Calu3 (cell line): ENCODE measurements at regions of chr7 and their contacts with region 1.

Region 1: GRCh38 chr7:106793015-106793975 is 71.8 kb upstream of the PIK3CG start:
- DNase-seq: peak; percentile 53
- H3K4me3 Mint-ChIP-seq: no peak overlapping the region
- H3K27ac Mint-ChIP-seq: no peak overlapping the region
- H3K4me1 Mint-ChIP-seq: no peaks in the 10 kb centered on the region
- H3K27me3 Mint-ChIP-seq: no peaks in the 10 kb centered on the region
- CTCF ChIP-seq: peak; percentile 62

Region 2: DNA sequence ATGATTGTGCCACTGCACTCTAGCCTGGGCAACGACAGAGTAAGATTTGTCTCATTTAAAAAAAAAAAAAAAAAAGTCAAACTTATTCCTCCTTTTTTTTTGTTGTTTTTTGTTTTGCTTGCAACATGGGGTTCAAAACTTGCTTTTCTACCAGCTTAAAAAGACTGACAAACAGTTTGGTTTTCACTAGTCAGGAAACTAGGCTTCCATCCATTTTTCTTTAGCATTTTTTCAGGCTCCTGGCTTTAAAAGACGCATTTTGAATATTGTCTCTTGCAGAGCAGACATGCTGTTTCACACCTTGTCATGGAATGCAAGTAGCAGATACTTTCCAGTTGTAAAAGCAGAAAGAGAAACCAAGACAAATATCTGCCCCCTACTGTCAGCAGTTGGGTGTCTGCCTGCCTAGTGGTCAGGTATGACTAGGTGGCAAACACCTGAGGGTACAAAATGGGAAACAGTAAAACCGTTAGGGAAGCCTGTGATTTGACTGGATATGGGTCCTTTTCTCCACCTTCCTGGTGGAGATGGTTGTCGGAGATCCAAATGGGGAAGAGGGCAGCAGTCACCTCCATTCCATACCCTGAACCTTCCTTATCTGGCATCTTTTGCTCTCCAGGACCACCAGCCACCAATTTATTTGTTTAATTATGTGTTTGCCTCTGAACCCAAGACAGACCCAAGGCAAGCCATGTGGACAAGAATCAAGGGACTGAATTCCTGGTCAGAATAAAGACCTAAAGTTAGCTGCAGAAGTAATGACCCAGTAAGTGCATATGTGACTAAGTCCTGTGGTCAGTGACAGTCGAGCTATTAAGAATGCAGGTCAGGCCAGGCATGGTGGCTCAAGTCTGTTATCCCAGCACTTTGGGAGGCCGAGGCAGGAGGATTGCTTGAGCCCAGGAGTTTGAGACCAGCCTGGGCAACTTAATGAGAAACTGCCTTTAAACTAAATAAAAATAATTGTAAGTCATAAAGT is 272.0 kb before region 1 on chr7:
- CTCF ChIA-PET with region 1: no interaction called
- intact Hi-C with region 1: no loop called
- DNase-seq: peak; percentile 19
- H3K4me3 Mint-ChIP-seq: no peak overlapping the region
- H3K27ac Mint-ChIP-seq: no peak overlapping the region
- H3K4me1 Mint-ChIP-seq: no peaks in the 10 kb centered on the region
- H3K27me3 Mint-ChIP-seq: peaks cover 14% of the 10 kb centered on the region
- CTCF ChIP-seq: no peak

Region 3: GRCh38 chr7:106824458-106824857 is 31.2 kb after region 1 on chr7:
- CTCF ChIA-PET with region 1: no interaction called
- intact Hi-C with region 1: no loop called
- DNase-seq: peak; percentile 51
- H3K4me3 Mint-ChIP-seq: no peak overlapping the region
- H3K27ac Mint-ChIP-seq: peak overlapping the region; percentile 71
- H3K4me1 Mint-ChIP-seq: peaks cover 26% of the 10 kb centered on the region
- H3K27me3 Mint-ChIP-seq: no peaks in the 10 kb centered on the region
- CTCF ChIP-seq: no peak

Region 4: DNA sequence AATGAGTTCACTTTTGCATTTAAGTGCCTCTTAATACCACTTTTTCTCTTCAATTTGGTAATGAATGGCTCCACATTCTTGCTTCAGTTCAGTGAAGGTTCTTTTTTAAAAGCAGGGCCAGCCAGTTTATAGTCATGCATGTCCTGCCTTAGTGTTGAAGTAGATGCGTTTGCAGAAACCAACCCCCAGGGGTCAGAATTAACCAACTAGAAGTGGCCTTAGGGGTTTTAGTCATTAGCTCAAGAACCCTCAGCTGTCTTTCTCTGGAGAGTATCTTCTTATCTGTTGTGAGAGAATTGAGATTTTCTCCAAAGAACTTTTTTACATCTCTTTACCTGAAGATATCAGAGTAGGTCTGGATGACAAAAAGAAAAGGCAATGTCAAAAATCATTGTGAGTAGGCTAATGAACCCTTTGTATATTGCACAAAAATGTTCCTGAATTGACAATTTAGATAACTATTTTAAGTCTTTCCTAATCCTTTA is 154.0 kb after region 1 on chr7:
- CTCF ChIA-PET with region 1: interaction called, 4 read pairs
- intact Hi-C with region 1: loop called (anchors 10 kb)
- DNase-seq: peak; percentile 40
- H3K4me3 Mint-ChIP-seq: no peak overlapping the region
- H3K27ac Mint-ChIP-seq: no peak overlapping the region
- H3K4me1 Mint-ChIP-seq: peaks cover 8% of the 10 kb centered on the region
- H3K27me3 Mint-ChIP-seq: peaks cover 58% of the 10 kb centered on the region
- CTCF ChIP-seq: no peak